ENCODE measurements at regions of chr2 and their contacts with region 1.

Region 1: GRCh38 chr2:71157124-71157793 is 26.8 kb downstream of the MPHOSPH10 start:
- DNase-seq: peak; percentile 62 to 77
- H3K4me3 ChIP-seq: no peak overlapping the region
- H3K4me3 Mint-ChIP-seq: no peak overlapping the region
- H3K27ac Mint-ChIP-seq: no peak overlapping the region
- H3K4me1 ChIP-seq: peaks cover 10% of the 10 kb centered on the region; the same call in 1 of the 2 replicates
- H3K4me1 Mint-ChIP-seq: peaks cover 15% of the 10 kb centered on the region
- H3K27me3 ChIP-seq: no peaks in the 10 kb centered on the region
- H3K27me3 Mint-ChIP-seq: peaks cover 3% of the 10 kb centered on the region
- CTCF ChIP-seq: peak; percentile 77 to 80

Region 2: DNA sequence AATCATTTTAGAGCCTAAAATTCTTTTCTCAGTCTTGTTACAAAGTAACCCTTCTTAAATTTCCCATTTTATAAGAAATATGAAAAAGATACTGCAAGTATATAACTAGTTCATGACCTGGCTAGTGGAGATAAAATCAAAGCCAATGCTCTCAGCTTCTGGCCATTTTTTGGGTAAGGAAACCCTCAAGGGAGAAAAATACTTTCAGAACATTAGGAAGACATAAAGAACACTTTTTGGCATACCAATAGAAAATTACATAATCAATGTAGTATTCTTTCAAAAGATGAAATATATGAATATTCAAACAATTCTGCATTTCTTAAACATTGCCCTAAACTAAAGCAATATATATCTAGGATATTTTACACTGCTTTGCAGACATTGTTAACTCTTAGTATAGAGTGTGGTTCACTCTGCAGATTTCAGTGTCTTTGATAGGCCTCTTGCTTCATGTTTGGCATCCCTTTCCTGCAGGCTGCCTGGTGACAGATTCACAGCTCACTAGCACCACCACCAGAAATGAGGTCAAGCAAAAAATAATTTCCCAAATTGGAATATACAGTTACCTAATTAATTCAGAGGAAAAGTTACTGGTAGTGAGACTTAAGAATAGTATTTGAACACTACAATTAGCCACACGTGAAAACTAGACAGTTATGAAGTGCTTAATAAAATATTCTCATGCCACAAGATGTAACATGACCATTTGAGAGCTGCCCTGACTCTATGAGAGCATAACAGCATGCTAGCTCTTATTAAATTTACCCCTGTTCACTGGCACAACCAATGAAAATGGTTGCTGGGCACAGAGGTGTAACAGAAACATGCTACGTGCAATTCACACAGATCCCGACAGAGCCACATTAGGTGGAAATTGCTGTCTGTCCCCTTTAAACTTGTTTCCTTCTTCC is 33.7 kb after region 1 on chr2:
- CTCF ChIA-PET with region 1: interaction called, 3 read pairs
- POLR2A ChIA-PET with region 1: no interaction called
- intact Hi-C with region 1: loop called (anchors 1 kb)
- DNase-seq: peak in 1 of 2 experiments; percentile 37
- H3K4me3 ChIP-seq: no peak overlapping the region
- H3K4me3 Mint-ChIP-seq: no peak overlapping the region
- H3K27ac Mint-ChIP-seq: no peak overlapping the region
- H3K4me1 ChIP-seq: no peaks in the 10 kb centered on the region
- H3K4me1 Mint-ChIP-seq: no peaks in the 10 kb centered on the region
- H3K27me3 ChIP-seq: no peaks in the 10 kb centered on the region
- H3K27me3 Mint-ChIP-seq: no peaks in the 10 kb centered on the region
- CTCF ChIP-seq: peak; percentile 25 to 44

Region 3: DNA sequence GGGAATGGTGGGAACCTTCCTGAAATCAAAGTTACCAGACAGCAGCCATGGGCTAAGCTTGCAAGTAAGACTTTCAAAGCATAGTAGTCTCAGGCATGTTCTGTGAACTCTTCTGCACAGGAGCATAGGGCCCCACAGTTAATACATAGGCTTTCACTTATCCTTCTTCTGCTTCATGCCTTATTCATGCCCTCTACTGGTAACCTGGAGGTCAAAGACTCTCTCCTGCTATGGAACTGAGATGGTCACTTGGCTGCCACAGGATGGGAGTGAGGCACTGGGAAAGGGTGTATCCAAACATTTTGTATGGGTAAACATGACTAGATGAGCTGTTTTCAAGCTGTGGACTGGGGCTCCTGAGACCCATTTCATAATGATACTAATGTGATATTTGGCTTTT is 125.2 kb after region 1 on chr2:
- CTCF ChIA-PET with region 1: no interaction called
- POLR2A ChIA-PET with region 1: no interaction called
- intact Hi-C with region 1: loop called (anchors 1 kb)
- DNase-seq: peak; percentile 46 to 58
- H3K4me3 ChIP-seq: no peak overlapping the region
- H3K4me3 Mint-ChIP-seq: no peak overlapping the region
- H3K27ac Mint-ChIP-seq: no peak overlapping the region
- H3K4me1 ChIP-seq: peaks cover 7% of the 10 kb centered on the region; the same call in 1 of the 2 replicates
- H3K4me1 Mint-ChIP-seq: no peaks in the 10 kb centered on the region
- H3K27me3 ChIP-seq: no peaks in the 10 kb centered on the region
- H3K27me3 Mint-ChIP-seq: peaks cover 6% of the 10 kb centered on the region
- CTCF ChIP-seq: peak; percentile 43 to 61

Measured in Caco-2 (cell line).